MCF 10A (cell line): ENCODE measurements at regions of chr17 and their contacts with region 1.

Region 1: DNA sequence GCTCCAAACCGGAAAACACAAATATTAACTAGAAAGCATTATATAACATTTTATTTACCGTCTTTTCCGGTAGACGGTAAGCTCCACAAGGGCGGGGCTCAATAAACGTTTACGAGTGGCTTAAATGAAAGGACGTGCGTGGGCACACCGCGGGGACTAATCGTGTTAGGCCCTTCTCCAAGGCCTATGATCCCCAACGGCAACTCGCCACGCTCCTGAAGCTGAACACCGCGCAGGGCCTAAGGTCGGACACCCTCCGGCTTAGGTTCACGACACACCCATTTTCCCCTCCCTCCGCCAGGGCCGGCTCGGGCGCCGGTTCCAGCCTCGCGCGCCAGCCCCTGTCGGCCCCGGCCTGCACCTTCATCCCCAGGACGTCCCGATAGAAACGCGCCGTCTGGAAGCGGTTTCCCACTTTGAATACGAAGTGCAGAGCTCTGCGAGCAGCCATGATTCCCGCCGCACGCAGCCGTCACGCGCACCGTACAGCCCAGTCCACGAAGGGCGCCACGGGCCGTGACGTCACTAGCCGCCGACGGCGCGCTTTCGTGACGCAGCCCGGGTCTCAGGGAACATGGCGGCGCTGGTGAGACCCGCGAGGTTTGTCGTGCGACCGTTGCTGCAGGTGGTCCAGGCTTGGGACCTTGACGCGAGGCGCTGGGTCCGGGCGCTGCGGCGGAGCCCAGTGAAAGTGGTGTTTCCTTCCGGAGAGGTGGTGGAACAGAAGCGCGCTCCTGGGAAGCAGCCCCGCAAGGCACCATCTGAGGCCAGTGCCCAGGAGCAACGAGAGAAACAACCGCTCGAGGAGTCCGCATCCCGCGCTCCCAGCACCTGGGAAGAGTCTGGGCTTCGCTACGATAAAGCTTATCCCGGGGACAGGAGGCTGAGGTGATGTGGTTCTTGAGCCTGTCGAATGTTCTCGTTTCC is at the starts of genes GLOD4 and MRM3:
- DNase-seq: peak; percentile 77
- H3K4me3 Mint-ChIP-seq: peak within 1 kb of the TSS; percentile 99
- H3K27ac Mint-ChIP-seq: peak within 1 kb of the TSS; percentile 98
- H3K4me1 Mint-ChIP-seq: peaks cover 10% of the 10 kb centered on the region
- H3K27me3 Mint-ChIP-seq: no peaks in the 10 kb centered on the region
- CTCF ChIP-seq: no peak
- total RNA-seq, gene GLOD4: 59.0 and 62.6 TPM in 2 replicates
- total RNA-seq, gene MRM3: 19.4 and 25.1 TPM in 2 replicates

Region 2: GRCh38 chr17:716238-716637 is 65.8 kb before region 1 on chr17:
- CTCF ChIA-PET with region 1: interaction called, 5 read pairs
- POLR2A ChIA-PET with region 1: interaction called, 28 read pairs
- intact Hi-C with region 1: no loop called
- DNase-seq: no peak
- H3K4me3 Mint-ChIP-seq: no peak overlapping the region
- H3K27ac Mint-ChIP-seq: no peak overlapping the region
- H3K4me1 Mint-ChIP-seq: peaks cover 14% of the 10 kb centered on the region
- H3K27me3 Mint-ChIP-seq: no peaks in the 10 kb centered on the region
- CTCF ChIP-seq: no peak

Region 3: DNA sequence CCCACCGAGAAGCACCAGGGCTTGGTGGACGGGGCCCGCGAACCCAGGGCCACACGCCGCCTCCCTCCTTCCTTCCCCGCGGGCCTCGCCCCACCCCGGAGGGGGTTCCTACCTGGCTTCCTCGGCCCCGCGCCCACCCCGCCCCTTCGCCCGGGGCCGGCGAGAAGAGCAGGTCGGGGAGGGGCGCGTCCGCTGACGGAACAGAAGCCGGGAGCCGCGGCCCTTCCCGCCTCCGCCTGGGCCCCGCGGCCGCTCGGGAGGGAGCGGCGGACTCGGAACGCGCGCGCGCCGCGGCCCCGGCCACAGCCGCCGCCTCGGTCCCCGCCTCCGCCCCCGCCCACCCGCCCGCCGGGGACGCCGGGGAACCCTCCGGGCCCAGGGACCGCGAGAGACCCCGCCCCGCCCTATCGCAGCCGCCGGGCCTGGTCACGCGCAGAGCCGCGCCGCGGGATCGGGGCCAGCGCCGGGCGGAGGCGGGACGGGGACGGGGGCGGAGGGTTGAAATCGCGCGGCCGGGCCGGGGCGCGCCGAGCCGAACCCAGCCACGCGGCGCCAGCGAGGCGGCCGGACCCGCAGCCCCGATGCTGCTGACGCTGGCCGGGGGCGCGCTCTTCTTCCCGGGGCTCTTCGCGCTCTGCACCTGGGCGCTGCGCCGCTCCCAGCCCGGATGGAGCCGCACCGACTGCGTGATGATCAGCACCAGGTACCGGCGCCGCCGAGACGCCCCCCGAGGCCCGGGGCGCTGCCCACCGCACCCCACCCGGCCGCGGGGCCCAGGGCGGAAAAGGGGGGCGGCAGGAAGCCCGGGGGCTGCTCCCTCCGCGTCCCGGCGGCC is 49.8 kb before region 1 on chr17 and contains the start of gene TLCD3A:
- CTCF ChIA-PET with region 1: interaction called, 6 read pairs
- POLR2A ChIA-PET with region 1: interaction called, 20 read pairs
- intact Hi-C with region 1: no loop called
- DNase-seq: peak; percentile 60
- H3K4me3 Mint-ChIP-seq: peak within 1 kb of the TSS; percentile 87
- H3K27ac Mint-ChIP-seq: peak within 1 kb of the TSS; percentile 61
- H3K4me1 Mint-ChIP-seq: peaks cover 31% of the 10 kb centered on the region
- H3K27me3 Mint-ChIP-seq: no peaks in the 10 kb centered on the region
- CTCF ChIP-seq: no peak
- total RNA-seq, gene TLCD3A: 28.4 and 31.6 TPM in 2 replicates

Region 4: GRCh38 chr17:752002-752619 is 30.0 kb before region 1 on chr17 and contains the start of gene GEMIN4:
- CTCF ChIA-PET with region 1: no interaction called
- POLR2A ChIA-PET with region 1: interaction called, 11 read pairs
- intact Hi-C with region 1: no loop called
- DNase-seq: peak; percentile 88
- H3K4me3 Mint-ChIP-seq: peak within 1 kb of the TSS; percentile 98
- H3K27ac Mint-ChIP-seq: peak within 1 kb of the TSS; percentile 93
- H3K4me1 Mint-ChIP-seq: peaks cover 18% of the 10 kb centered on the region
- H3K27me3 Mint-ChIP-seq: no peaks in the 10 kb centered on the region
- CTCF ChIP-seq: peak; percentile 97
- total RNA-seq, gene GEMIN4: 19.5 and 24.1 TPM in 2 replicates

Region 5: GRCh38 chr17:794876-795275 is 12.8 kb after region 1 on chr17:
- CTCF ChIA-PET with region 1: interaction called, 4 read pairs
- POLR2A ChIA-PET with region 1: interaction called, 12 read pairs
- intact Hi-C with region 1: no loop called
- DNase-seq: peak; percentile 58
- H3K4me3 Mint-ChIP-seq: no peak overlapping the region
- H3K27ac Mint-ChIP-seq: no peak overlapping the region
- H3K4me1 Mint-ChIP-seq: peaks cover 6% of the 10 kb centered on the region
- H3K27me3 Mint-ChIP-seq: no peaks in the 10 kb centered on the region
- CTCF ChIP-seq: peak; percentile 70

Region 6: GRCh38 chr17:879549-880442 is 97.7 kb after region 1 on chr17:
- CTCF ChIA-PET with region 1: interaction called, 6 read pairs
- POLR2A ChIA-PET with region 1: interaction called, 12 read pairs
- intact Hi-C with region 1: loop called (anchors 1 kb)
- DNase-seq: peak; percentile 98
- H3K4me3 Mint-ChIP-seq: peak overlapping the region; percentile 66
- H3K27ac Mint-ChIP-seq: peak overlapping the region; percentile 91
- H3K4me1 Mint-ChIP-seq: peaks cover 34% of the 10 kb centered on the region
- H3K27me3 Mint-ChIP-seq: no peaks in the 10 kb centered on the region
- CTCF ChIP-seq: peak; percentile 59

Region 7: DNA sequence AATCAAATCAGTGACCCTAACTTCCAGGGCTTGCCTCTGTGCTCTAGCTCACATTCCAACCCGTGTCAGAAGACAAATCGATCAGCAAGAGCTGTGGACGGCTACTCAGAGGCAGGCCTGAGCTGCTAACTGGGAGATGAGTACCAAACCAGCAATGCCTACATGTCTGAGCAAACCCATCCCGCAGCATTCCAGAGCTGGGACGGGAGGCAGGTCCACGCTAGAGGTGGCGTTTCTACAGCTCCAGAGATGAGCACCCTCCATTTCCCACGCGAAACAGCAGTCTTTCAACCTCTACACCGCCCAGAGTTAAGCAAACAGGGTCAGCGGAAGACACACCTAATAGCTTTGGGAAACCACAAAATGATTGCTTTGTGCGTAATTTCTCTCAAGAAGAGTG is 191.0 kb after region 1 on chr17:
- CTCF ChIA-PET with region 1: interaction called, 3 read pairs
- POLR2A ChIA-PET with region 1: interaction called, 11 read pairs
- intact Hi-C with region 1: no loop called
- DNase-seq: peak; percentile 32
- H3K4me3 Mint-ChIP-seq: peak overlapping the region; percentile 58
- H3K27ac Mint-ChIP-seq: peak overlapping the region; percentile 65
- H3K4me1 Mint-ChIP-seq: peaks cover 11% of the 10 kb centered on the region
- H3K27me3 Mint-ChIP-seq: no peaks in the 10 kb centered on the region
- CTCF ChIP-seq: no peak